Gastrocnemius medialis (tissue), 4 donors: ENCODE measurements at regions of chr3 and their contacts with region 1.

Region 1: DNA sequence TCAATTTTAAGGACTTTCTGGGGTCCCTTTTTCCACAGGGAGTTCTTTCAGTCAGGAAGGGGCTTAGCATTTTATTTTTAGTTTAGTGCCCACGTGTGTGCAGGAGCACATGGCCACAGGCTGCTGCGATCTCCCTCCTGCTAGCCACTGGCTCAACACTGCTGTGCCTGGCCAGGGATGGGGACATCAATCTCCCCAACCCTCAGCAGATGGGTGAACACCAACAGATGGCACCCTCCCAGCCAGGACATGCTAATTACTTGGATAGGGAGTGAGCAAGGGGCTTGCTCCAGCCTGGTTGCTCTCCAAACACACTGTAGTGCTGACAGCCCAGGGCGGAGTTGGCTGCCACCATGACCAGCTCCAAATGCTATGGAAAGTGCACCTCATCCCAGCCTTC is 7.4 kb upstream of the RIOX2 start:
- DNase-seq: no peak
- ATAC-seq: peak in 1 of 2 donors; percentile 25
- H3K4me3 ChIP-seq: no peak overlapping the region
- H3K27ac ChIP-seq: no peak overlapping the region
- H3K4me1 ChIP-seq: peaks cover 6 to 19% of the 10 kb centered on the region in 2 donors
- H3K27me3 ChIP-seq: no peaks in the 10 kb centered on the region
- CTCF ChIP-seq: no peak
- POLR2A ChIP-seq: no peak

Region 2: DNA sequence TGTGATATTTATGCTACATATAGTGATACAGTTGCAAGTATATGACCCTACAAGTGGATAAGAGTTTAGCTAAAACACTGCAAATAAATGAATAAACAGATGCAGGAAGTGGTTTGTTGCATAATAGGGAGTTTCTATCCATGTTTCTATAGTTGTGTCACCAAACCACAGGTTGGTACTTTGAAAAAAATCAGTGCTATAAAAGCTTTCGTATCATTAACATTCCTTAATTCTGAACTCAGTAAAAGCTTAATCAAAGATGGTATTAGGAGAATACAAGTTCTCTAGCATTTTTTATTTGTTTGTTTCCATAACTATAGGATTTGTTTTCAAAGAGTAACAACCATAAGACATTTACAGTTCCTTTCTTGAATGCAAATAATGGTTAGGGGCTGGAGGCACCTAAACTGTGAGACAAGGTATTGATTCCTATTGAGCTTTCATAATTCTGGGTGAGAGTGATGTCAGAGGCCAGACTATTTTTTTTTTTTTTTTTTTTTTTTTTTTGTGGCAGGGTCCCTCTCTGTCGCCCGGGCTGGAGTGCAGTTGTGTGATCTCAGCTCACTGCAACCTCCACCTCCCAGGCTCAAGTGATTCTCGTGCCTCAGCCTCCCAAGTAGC is 584.2 kb after region 1 on chr3:
- in situ Hi-C with region 1: no loop called
- intact Hi-C with region 1: no loop called
- DNase-seq: no peak
- ATAC-seq: no peak
- H3K4me3 ChIP-seq: no peak overlapping the region
- H3K27ac ChIP-seq: no peak overlapping the region
- H3K4me1 ChIP-seq: no peaks in the 10 kb centered on the region
- H3K27me3 ChIP-seq: no peaks in the 10 kb centered on the region
- CTCF ChIP-seq: no peak
- POLR2A ChIP-seq: no peak

Region 3: DNA sequence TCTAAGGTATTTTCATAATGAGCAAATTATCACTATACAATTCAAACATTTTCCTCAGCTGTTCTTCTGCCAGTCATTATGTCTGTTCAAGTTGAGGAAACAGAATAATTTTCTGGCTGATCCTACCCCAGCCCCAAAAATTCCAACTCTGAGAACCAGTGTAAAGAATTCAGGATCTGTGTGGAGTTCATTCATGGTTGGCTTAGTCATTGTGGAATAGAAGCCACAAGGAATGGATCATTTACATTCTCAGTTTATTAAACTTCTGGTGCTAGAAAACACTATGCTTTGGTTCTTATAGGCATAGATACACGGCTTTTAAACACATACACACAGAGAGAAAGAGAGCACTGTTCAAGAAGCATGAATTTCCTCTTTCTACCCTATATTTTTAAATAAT is 1972.7 kb after region 1 on chr3:
- in situ Hi-C with region 1: no loop called
- intact Hi-C with region 1: loop called (anchors 5 kb)
- DNase-seq: no peak
- ATAC-seq: no peak
- H3K4me3 ChIP-seq: no peak overlapping the region
- H3K27ac ChIP-seq: peak overlapping the region; percentile 23 to 75 (median 33)
- H3K4me1 ChIP-seq: peaks cover 34 to 56% of the 10 kb centered on the region in 2 donors
- H3K27me3 ChIP-seq: no peaks in the 10 kb centered on the region
- CTCF ChIP-seq: no peak
- POLR2A ChIP-seq: no peak